Right lobe of liver (tissue), 6 donors: ENCODE measurements at regions of chr2 and their contacts with region 1.

Region 1: DNA sequence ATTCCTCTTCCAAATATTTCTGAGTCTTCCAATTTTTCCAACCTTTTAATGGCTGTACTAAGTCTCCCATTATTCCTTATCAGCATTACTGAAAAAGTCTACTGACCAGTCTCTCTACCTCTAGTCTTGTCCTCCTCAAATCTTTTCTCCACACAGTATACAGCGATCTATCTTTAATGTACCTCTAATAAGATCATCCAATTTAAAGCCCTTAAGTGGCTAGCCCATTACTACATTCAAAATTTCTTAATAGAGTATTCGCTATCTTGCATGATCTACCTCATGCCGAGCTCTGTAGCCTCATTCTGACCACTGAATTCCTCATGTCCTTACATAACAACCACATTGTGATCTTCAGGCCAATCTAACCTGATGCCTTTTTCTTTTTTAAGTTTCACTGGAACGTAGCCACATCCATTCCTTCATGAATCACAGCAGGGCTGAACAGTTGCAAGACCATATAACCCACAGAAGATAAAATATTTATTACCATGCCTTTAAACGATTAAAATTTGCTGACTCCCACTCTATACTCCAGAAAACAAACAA is 57.9 kb downstream of the SLC66A3 start:
- DNase-seq: no peak
- ATAC-seq: no peak
- H3K4me3 ChIP-seq: no peak overlapping the region
- H3K27ac ChIP-seq: no peak overlapping the region
- H3K4me1 ChIP-seq: no peaks in the 10 kb centered on the region
- H3K27me3 ChIP-seq: no peaks in the 10 kb centered on the region
- CTCF ChIP-seq: no peak
- POLR2A ChIP-seq: no peak

Region 2: DNA sequence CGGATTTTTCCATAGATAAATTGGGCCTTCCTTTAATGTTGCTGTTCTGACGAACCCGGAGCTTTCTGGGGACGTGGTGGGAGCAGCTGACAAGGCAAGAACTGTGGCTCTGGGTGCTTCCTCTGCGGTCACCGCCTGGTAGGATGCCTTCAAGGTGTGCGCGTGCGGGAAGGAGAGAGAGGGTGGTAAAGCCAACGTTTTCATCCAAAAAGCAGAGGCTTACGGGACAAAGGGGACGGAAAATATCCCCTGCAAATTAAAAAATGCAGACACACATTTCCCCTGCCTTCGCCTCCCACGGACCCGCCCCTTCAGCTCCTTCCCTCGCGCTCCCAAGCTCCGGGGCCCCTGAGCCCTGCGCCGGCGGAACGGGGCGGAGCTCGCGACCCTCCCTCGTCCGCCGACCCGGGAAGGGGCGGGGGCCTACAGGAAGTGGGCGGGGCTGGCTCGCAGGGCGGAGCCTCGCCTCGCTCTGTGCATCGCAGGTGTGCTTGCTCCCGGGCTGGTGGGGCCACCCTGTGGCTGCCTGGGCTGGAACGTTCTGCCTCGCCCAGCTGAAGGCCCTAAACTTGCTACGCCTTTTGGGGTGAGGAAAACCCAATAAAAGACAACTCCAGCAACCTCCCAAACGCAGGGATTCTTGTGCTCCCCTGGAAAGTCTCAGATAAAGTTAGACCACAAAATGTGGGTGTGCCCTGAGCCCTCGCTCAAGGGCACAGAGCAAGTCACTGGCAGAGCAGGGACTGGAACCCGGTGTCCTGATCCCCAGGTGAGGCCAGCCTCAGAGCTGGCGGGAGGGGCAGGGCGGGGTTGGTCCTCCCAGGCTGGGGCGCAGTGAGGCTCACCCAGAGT is 83.3 kb before region 1 on chr2:
- intact Hi-C with region 1: loop called in 1 of 2 experiments (anchors 10 kb)
- DNase-seq: peak; percentile 65 to 76 (median 72)
- ATAC-seq: peak; percentile 56 to 79 (median 72)
- H3K4me3 ChIP-seq: peak overlapping the region; percentile 13 to 51 (median 45)
- H3K27ac ChIP-seq: peak overlapping the region in 1 of 3 donors; percentile 12
- H3K4me1 ChIP-seq: peaks cover 0 to 25% (median 3%) of the 10 kb centered on the region in 4 donors
- H3K27me3 ChIP-seq: no peaks in the 10 kb centered on the region
- CTCF ChIP-seq: peak; percentile 28 to 37 (median 32)
- POLR2A ChIP-seq: no peak

Region 3: DNA sequence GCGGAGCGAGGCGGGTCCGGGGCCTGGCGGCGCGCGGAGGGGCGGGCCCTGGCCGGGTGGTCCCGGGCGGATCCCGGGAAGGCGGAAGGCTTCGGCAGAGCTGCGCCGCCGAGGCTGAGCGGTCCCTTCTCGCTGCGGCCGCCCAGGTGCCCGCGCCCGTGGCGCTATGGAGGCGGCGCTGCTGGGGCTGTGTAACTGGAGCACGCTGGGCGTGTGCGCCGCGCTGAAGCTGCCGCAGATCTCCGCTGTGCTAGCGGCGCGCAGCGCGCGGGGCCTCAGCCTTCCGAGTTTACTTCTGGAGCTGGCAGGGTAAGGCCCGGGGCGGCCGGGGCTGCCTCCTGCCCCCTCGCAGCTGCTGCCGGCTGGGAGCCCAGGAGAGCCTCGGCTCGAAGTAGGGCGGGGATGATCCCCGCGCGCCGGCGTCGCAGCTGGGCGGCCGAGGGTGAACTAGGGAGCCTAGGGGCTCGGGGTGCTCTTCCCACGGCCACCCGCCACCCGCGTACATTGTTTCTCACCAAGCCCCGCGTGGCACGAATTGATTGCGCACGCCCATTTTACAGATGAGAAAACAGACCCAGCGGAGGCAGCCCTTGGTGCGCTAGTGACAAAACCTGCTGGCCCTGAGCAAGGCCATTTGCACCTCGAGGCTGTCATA is 57.7 kb before region 1 on chr2 and contains the start of gene SLC66A3:
- intact Hi-C with region 1: no loop called
- DNase-seq: peak in 1 of 3 donors; percentile 63
- ATAC-seq: peak; percentile 84 to 90 (median 87)
- H3K4me3 ChIP-seq: peak within 1 kb of the TSS; percentile 59 to 66 (median 64)
- H3K27ac ChIP-seq: peak within 1 kb of the TSS; percentile 62 to 87 (median 74)
- H3K4me1 ChIP-seq: peaks cover 0 to 6% (median 0%) of the 10 kb centered on the region in 4 donors
- H3K27me3 ChIP-seq: no peaks in the 10 kb centered on the region
- CTCF ChIP-seq: peak in 2 of 4 donors; percentile 18 to 22
- POLR2A ChIP-seq: peak; percentile 85
- total RNA-seq, gene SLC66A3: 4.9 to 16.1 (median 8.8) TPM